CD8-positive, alpha-beta T cell (primary cell): ENCODE measurements at regions of chr22 and their contacts with region 1.

Region 1: DNA sequence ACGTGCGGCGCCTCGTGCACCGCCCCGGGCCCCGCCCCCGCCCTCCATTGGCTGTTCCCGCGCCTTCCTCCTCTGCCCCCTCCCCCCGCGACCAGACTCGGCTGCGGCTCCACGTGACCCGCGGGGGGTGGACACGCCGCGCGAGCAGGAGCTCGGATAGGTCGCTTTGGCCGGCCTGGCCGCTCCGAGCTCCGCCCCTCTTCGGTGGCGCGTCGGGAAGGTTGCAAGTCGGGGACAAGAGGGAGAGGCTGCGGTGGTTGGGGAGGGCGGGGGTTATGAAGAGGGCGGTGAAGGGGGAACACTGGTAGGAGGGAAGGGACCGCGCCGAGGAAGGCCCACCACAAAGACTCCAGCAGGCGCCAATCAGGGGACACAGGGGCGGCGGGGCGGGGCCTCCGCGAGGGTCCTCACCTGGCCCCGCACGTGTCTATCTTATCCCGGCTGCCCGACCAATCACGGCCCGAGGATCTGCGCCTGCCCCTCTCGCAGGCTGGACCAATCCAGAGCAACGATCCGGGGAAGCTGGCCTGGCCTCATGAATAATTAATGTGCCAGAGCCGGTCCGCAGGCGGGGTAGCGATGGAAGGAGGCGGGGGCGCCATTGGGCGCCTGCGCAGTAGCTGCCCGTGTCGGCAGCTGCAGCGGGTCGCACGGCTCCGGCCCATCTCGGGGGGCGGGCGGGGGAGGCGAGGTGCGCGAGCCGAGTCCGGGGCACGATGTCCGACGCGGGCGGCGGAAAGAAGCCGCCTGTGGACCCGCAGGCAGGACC is at the start of gene TEF:
- DNase-seq: peak; percentile 97 to 100 (median 98)
- ATAC-seq: peak; percentile 80
- H3K4me3 ChIP-seq: peak within 1 kb of the TSS; percentile 71 to 88
- H3K4me3 Mint-ChIP-seq: peak within 1 kb of the TSS; percentile 93
- H3K27ac ChIP-seq: peak within 1 kb of the TSS; percentile 87 to 95
- H3K27ac Mint-ChIP-seq: peak within 1 kb of the TSS; percentile 93
- H3K4me1 ChIP-seq: peaks cover 15% of the 10 kb centered on the region
- H3K4me1 Mint-ChIP-seq: peaks cover 21% of the 10 kb centered on the region
- H3K27me3 ChIP-seq: no peaks in the 10 kb centered on the region
- H3K27me3 Mint-ChIP-seq: no peaks in the 10 kb centered on the region
- CTCF ChIP-seq: no peak
- total RNA-seq, gene TEF: 2.8 to 3.8 TPM

Region 2: GRCh38 chr22:40856513-40857308 is 524.8 kb before region 1 on chr22 and contains the starts of genes ST13 and XPNPEP3:
- CTCF ChIA-PET with region 1: no interaction called
- POLR2A ChIA-PET with region 1: no interaction called
- intact Hi-C with region 1: loop called in 1 of 2 experiments (anchors 1 kb)
- DNase-seq: peak; percentile 92 to 98 (median 97)
- ATAC-seq: peak; percentile 88
- H3K4me3 ChIP-seq: peak within 1 kb of the TSS; percentile 85 to 97
- H3K4me3 Mint-ChIP-seq: peak within 1 kb of the TSS; percentile 98
- H3K27ac ChIP-seq: peak within 1 kb of the TSS; percentile 97 to 99
- H3K27ac Mint-ChIP-seq: peak within 1 kb of the TSS; percentile 100
- H3K4me1 ChIP-seq: peaks cover 40% of the 10 kb centered on the region
- H3K4me1 Mint-ChIP-seq: peaks cover 65% of the 10 kb centered on the region
- H3K27me3 ChIP-seq: no peaks in the 10 kb centered on the region
- H3K27me3 Mint-ChIP-seq: no peaks in the 10 kb centered on the region
- CTCF ChIP-seq: peak; percentile 42
- total RNA-seq, gene ST13: 143 to 160 TPM
- total RNA-seq, gene XPNPEP3: 13.9 to 15.2 TPM

Region 3: DNA sequence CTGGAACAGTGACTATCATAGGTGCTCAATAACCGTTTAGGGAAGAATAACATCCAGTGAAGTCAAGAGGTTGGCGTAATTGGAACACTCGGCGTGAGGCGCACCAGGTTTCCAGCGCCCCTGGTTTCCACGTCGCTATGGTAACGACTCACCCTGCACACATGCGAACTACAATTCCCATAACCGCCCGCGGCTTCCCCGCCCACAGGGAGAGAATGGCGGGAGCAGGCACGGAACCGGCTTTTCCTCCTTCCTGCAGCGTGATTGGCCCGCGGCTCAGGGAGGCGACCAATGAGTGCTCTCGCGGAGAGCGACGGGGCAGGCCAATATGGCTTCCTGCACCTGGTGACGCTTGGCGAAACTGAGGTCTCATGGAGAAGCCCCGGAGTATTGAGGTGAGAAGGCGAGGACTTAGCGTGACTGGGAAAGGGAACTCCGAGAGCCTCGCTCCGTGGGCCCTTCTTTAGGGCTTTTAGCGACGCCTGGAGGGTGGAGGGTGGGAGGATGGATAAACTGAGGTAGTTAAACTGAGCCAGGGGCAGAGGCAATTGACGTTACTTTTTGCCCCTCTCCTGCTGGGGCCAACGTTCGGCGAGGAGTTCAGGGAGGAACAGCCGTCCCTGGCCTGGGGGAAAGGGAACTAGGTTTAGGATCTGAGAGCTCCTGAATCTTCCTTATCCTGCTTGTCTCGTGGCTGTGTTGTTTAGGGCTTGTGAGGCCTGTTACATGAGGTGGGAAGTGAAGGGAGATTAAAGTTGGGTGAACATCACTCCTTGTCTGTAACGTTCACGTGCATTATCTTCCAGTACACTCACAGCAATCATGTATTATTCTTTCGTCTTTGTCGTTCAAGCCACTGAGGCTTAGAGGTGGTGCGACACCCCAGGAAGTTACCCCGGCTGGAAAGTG is 176.3 kb before region 1 on chr22 and contains the start of gene L3MBTL2:
- CTCF ChIA-PET with region 1: no interaction called
- POLR2A ChIA-PET with region 1: no interaction called
- intact Hi-C with region 1: loop called (anchors 1 kb)
- DNase-seq: peak; percentile 96 to 99 (median 98)
- ATAC-seq: peak; percentile 100
- H3K4me3 ChIP-seq: peak within 1 kb of the TSS; percentile 77 to 83
- H3K4me3 Mint-ChIP-seq: peak within 1 kb of the TSS; percentile 97
- H3K27ac ChIP-seq: peak within 1 kb of the TSS; percentile 60 to 83
- H3K27ac Mint-ChIP-seq: peak within 1 kb of the TSS; percentile 96
- H3K4me1 ChIP-seq: peaks cover 9% of the 10 kb centered on the region
- H3K4me1 Mint-ChIP-seq: peaks cover 32% of the 10 kb centered on the region
- H3K27me3 ChIP-seq: peaks cover 0 to 2% of the 10 kb centered on the region in 2 experiments
- H3K27me3 Mint-ChIP-seq: peaks cover 9% of the 10 kb centered on the region
- CTCF ChIP-seq: no peak
- total RNA-seq, gene L3MBTL2: 16.3 to 20.3 TPM

Region 4: DNA sequence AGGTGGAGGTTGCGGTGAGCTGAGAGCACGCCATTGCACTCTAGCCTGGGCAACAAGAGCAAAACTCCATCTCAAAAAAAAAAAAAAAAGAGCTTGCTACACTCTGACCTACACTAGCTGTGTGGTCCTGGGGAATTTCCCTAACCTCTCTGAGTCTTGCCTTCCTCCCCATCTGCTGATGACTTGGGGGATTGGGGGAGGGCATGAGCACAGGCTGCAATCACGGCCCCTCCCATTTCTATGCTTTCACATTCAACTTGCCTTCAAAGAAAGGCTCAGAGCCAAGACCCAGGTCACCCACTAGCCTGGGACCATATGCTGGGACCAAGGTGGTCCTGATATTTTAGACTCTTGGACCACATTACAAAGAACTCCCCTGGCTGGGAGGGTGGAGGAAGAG is 39.5 kb before region 1 on chr22:
- CTCF ChIA-PET with region 1: no interaction called
- POLR2A ChIA-PET with region 1: no interaction called
- intact Hi-C with region 1: no loop called
- DNase-seq: peak in 1 of 9 experiments; percentile 42
- ATAC-seq: no peak
- H3K4me3 ChIP-seq: no peak overlapping the region
- H3K4me3 Mint-ChIP-seq: no peak overlapping the region
- H3K27ac ChIP-seq: no peak overlapping the region
- H3K27ac Mint-ChIP-seq: peak overlapping the region; percentile 57
- H3K4me1 ChIP-seq: no peaks in the 10 kb centered on the region
- H3K4me1 Mint-ChIP-seq: peaks cover 3% of the 10 kb centered on the region
- H3K27me3 ChIP-seq: no peaks in the 10 kb centered on the region
- H3K27me3 Mint-ChIP-seq: no peaks in the 10 kb centered on the region
- CTCF ChIP-seq: no peak

Region 5: GRCh38 chr22:41403532-41404318 is 22.2 kb after region 1 on chr22:
- CTCF ChIA-PET with region 1: interaction called, 12 read pairs
- POLR2A ChIA-PET with region 1: no interaction called
- intact Hi-C with region 1: no loop called
- DNase-seq: peak; percentile 60 to 90 (median 81)
- ATAC-seq: peak; percentile 99
- H3K4me3 ChIP-seq: no peak overlapping the region
- H3K4me3 Mint-ChIP-seq: no peak overlapping the region
- H3K27ac ChIP-seq: no peak overlapping the region
- H3K27ac Mint-ChIP-seq: no peak overlapping the region
- H3K4me1 ChIP-seq: peaks cover 13% of the 10 kb centered on the region
- H3K4me1 Mint-ChIP-seq: peaks cover 11% of the 10 kb centered on the region
- H3K27me3 ChIP-seq: no peaks in the 10 kb centered on the region
- H3K27me3 Mint-ChIP-seq: no peaks in the 10 kb centered on the region
- CTCF ChIP-seq: peak; percentile 93

Region 6: DNA sequence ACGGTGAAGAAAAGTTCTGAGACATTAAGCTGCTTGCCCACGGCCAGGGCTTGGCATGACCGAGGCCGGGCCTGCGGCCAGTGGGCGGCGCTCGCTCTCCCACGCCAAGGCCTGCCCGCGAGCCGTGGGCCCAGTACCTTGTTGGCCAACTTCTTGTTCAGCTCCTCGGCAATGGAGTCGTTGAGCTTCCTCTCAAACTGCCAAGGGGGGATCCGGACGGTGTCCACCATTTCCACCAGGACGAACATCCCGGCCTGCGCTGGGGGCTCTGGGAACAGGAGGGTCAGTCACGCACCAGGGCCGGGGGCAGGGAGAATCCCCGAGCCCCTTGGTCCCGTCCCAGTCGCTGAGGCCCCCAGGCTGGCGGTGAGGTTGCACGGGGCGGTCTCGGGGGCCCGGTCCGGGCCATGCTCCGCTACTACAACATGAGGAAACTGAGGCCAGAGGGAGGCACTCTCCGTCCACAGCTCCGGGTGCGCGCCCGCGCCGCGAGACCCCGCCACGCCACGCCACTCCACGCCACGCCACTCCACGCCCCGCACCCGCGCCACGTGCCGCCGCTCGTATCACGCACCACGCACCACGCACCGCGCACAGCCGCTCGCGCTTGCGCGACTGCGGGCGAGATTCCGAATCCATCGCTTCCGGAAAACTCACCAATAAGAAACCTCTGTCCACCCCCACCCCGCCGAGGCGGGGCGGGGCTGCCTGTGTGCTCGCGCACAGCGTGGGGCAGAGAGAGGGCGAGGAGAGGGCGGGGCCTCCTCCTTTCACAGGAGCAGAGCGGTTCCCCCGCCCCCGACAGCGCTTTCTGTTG is 162.5 kb after region 1 on chr22 and contains the start of gene POLR3H:
- CTCF ChIA-PET with region 1: no interaction called
- POLR2A ChIA-PET with region 1: no interaction called
- intact Hi-C with region 1: loop called (anchors 1 kb)
- DNase-seq: peak; percentile 92 to 99 (median 97)
- ATAC-seq: peak; percentile 98
- H3K4me3 ChIP-seq: peak within 1 kb of the TSS; percentile 75 to 95
- H3K4me3 Mint-ChIP-seq: peak within 1 kb of the TSS; percentile 98
- H3K27ac ChIP-seq: peak within 1 kb of the TSS; percentile 82 to 83
- H3K27ac Mint-ChIP-seq: peak within 1 kb of the TSS; percentile 94
- H3K4me1 ChIP-seq: peaks cover 30% of the 10 kb centered on the region
- H3K4me1 Mint-ChIP-seq: peaks cover 40% of the 10 kb centered on the region
- H3K27me3 ChIP-seq: no peaks in the 10 kb centered on the region
- H3K27me3 Mint-ChIP-seq: no peaks in the 10 kb centered on the region
- CTCF ChIP-seq: no peak
- total RNA-seq, gene POLR3H: 11.2 to 11.7 TPM

Region 7: DNA sequence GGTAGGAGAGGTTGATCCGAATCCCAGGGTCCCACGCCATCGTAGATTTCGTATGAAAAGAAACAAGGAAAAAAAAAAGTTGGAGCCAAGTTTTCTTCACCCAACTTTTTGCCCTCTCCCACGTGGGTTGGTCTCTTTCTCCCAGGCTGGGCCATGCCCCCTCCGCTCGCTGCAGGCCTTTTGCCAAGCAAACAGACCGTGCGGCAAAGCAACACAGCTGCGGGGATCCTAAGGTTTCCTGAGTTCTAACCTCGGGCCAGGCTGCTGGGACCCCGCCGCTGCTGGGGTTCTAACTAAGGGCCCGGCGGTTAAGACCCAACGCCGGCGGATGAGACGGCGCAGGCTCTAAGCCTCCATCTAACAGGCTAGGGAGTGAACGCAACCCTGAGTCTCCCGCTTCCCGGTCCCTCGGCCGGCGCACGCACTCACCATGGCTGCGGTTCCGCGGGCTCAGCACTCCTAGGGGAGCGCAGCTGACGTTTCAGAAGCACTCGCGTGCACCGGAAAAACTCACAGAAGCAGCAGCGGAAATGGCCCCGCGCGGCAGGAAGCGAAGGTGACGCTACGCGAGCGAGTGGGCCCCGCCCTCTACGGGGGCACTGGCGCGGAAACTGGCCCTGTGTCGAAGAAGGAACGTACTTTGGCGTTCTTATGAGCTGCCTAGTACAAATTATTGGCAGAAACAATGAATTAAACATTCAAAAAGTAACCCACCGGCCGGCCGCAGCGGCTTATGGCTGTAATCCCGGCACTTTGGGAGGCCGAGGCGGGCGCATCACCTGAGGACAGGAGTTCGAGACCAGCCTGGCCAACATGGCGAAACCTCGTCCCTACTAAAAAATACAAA is 307.1 kb after region 1 on chr22 and contains the start of gene SNU13:
- CTCF ChIA-PET with region 1: no interaction called
- POLR2A ChIA-PET with region 1: no interaction called
- intact Hi-C with region 1: loop called in 1 of 2 experiments (anchors 5 kb)
- DNase-seq: peak; percentile 84 to 97 (median 93)
- ATAC-seq: peak; percentile 92
- H3K4me3 ChIP-seq: peak within 1 kb of the TSS; percentile 90 to 96
- H3K4me3 Mint-ChIP-seq: peak within 1 kb of the TSS; percentile 90
- H3K27ac ChIP-seq: peak within 1 kb of the TSS; percentile 97
- H3K27ac Mint-ChIP-seq: peak within 1 kb of the TSS; percentile 95
- H3K4me1 ChIP-seq: peaks cover 17% of the 10 kb centered on the region
- H3K4me1 Mint-ChIP-seq: peaks cover 30% of the 10 kb centered on the region
- H3K27me3 ChIP-seq: no peaks in the 10 kb centered on the region
- H3K27me3 Mint-ChIP-seq: no peaks in the 10 kb centered on the region
- CTCF ChIP-seq: no peak
- total RNA-seq, gene SNU13: 158 to 173 TPM

Region 8: DNA sequence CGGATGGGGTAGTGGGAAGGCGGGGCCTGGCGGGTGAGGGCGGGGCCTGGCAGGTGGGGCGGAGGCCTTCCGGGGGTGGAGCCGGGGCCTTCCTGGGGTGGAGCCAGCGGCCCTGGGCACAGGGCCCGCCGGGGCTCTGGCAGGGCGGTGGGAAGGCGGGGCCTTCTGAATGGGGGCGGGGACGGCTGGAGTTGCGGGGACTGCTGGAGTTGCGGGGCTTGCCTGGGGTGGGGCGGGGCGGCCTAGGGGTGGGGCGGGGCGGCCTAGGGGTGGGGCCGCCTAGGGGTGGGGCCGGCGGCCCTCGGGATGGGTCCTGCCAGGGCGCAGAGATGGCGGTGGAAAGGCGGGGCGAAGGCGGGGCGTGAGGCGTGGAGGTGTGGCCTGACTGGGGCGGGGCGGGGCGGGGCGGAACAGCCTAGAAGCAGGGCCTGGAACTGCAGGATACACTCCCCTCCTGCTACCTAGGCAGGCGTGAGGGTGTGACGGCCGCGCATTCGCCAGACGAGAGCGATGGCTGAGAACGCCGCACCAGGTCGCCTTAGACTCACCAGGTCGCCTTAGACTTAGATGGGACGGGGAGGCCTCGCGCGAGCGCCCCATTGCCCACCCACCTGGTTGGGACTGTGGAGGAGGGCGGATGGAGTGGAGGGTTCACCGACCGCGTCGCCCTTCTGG is 1118.8 kb after region 1 on chr22:
- CTCF ChIA-PET with region 1: no interaction called
- POLR2A ChIA-PET with region 1: no interaction called
- intact Hi-C with region 1: loop called in 1 of 2 experiments (anchors 5 kb)
- DNase-seq: peak; percentile 67 to 91 (median 82)
- ATAC-seq: peak; percentile 94
- H3K4me3 ChIP-seq: peak overlapping the region; percentile 42 to 48
- H3K4me3 Mint-ChIP-seq: peak overlapping the region; percentile 72
- H3K27ac ChIP-seq: no peak overlapping the region
- H3K27ac Mint-ChIP-seq: no peak overlapping the region
- H3K4me1 ChIP-seq: peaks cover 7% of the 10 kb centered on the region
- H3K4me1 Mint-ChIP-seq: peaks cover 4% of the 10 kb centered on the region
- H3K27me3 ChIP-seq: no peaks in the 10 kb centered on the region
- H3K27me3 Mint-ChIP-seq: no peaks in the 10 kb centered on the region
- CTCF ChIP-seq: no peak